ENCODE measurements at regions of chr2 and their contacts with region 1.

Region 1: GRCh38 chr2:137838255-137839092 is 125.8 kb upstream of the HNMT start:
- DNase-seq: peak in 2 of 5 donors; percentile 21 to 35
- H3K4me3 ChIP-seq: no peak overlapping the region
- H3K4me3 Mint-ChIP-seq: no peak overlapping the region
- H3K27ac ChIP-seq: no peak overlapping the region
- H3K27ac Mint-ChIP-seq: no peak overlapping the region
- H3K4me1 ChIP-seq: no peaks in the 10 kb centered on the region
- H3K4me1 Mint-ChIP-seq: no peaks in the 10 kb centered on the region
- H3K27me3 ChIP-seq: no peaks in the 10 kb centered on the region
- H3K27me3 Mint-ChIP-seq: peaks cover 3 to 4% of the 10 kb centered on the region in 2 donors

Region 2: DNA sequence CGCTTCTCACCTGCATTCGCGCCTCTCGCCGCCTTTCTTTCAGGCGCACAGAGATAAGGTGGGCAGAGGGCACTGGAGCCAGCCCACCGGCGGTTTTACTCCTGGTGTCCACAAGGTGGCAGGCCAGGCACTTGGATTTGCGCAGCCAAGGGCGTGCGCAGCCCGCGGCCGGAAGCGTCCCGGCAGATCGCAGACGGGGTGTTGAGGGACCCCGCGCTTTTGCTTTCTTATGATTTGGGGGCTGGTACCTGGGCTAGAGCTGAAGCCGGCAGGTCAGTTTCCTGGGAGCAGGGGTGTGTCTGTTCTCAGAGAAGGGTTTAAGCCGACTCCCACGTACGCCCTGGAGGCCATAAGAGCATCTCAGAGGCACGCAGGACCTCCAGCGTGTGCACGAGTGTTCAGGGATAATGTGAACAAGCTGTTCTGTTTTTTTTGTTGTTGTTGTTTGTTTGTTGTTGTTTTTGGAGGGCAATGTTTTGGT is 1414.9 kb before region 1 on chr2:
- CTCF ChIA-PET with region 1: interaction called, 25 read pairs
- POLR2A ChIA-PET with region 1: no interaction called
- DNase-seq: peak; percentile 58 to 83 (median 72)
- H3K4me3 ChIP-seq: peak overlapping the region; percentile 55
- H3K4me3 Mint-ChIP-seq: peak overlapping the region; percentile 82 to 92 (median 85)
- H3K27ac ChIP-seq: no peak overlapping the region
- H3K27ac Mint-ChIP-seq: peak overlapping the region in 7 of 8 donors; percentile 9 to 93 (median 76)
- H3K4me1 ChIP-seq: peaks cover 11% of the 10 kb centered on the region
- H3K4me1 Mint-ChIP-seq: peaks cover 16 to 19% (median 16%) of the 10 kb centered on the region in 3 donors
- H3K27me3 ChIP-seq: peaks cover 3% of the 10 kb centered on the region
- H3K27me3 Mint-ChIP-seq: peaks cover 23 to 59% of the 10 kb centered on the region in 2 donors

Measured in CD8-positive, alpha-beta memory T cell (primary cell).